Caco-2 (cell line): ENCODE measurements at regions of chr2 and their contacts with region 1.

Region 1: GRCh38 chr2:236180831-236181453 is 12.8 kb upstream of the GBX2 start:
- DNase-seq: peak in 1 of 2 experiments; percentile 61
- H3K4me3 ChIP-seq: no peak overlapping the region
- H3K4me3 Mint-ChIP-seq: peak overlapping the region; percentile 52
- H3K27ac Mint-ChIP-seq: no peak overlapping the region
- H3K4me1 ChIP-seq: 0 out of 2 replicates have a peak, but pooled peaks cover 2% of the 10 kb centered on the region
- H3K4me1 Mint-ChIP-seq: no peaks in the 10 kb centered on the region
- H3K27me3 ChIP-seq: no peaks in the 10 kb centered on the region
- H3K27me3 Mint-ChIP-seq: no peaks in the 10 kb centered on the region
- CTCF ChIP-seq: peak; percentile 53 to 69

Region 2: DNA sequence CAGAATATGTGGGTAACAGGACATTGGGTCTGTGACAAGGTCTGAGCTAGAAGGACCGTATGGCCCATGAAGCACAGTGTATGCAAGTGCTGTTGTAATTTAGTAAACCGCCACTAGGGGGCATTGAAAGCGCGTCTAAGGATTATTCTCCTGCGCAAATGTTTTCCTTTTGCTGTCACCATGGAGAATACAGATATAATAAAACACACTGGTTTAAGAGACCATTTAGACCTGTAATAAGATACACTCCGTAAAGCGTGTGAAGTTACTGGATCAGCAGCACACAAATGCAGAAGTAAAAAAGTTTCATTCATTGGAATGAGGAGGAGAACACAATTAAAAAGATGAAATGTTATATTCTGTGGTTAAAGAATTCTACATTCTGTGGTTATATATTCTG is 414.7 kb before region 1 on chr2:
- CTCF ChIA-PET with region 1: interaction called, 7 read pairs
- POLR2A ChIA-PET with region 1: no interaction called
- intact Hi-C with region 1: loop called (anchors 1 kb)
- DNase-seq: peak; percentile 51 to 73
- H3K4me3 ChIP-seq: no peak overlapping the region
- H3K4me3 Mint-ChIP-seq: no peak overlapping the region
- H3K27ac Mint-ChIP-seq: peak overlapping the region; percentile 80
- H3K4me1 ChIP-seq: no peaks in the 10 kb centered on the region
- H3K4me1 Mint-ChIP-seq: no peaks in the 10 kb centered on the region
- H3K27me3 ChIP-seq: no peaks in the 10 kb centered on the region
- H3K27me3 Mint-ChIP-seq: no peaks in the 10 kb centered on the region
- CTCF ChIP-seq: peak; percentile 59 to 70

Region 3: DNA sequence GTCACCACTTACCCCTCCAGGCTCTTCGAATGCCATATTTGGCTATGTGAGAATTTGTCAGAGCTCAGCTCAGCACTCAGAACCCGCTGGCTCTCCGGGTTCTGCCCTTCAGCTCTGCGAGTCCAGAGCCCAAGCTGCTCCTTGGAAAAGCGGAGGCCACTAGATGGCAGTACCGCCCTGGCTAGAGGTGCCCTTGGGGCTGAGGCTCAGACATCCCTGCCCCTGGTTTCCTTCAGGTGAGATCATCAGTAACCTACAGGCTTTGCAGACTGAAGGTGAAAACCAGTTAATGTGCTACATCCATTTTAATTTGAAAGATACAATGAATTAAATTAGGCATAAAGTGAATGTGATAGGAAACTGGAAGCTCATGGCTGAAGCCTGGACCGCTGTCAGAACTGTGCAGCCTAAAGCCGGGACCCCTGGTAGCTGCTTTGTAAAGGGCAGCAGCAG is 401.5 kb before region 1 on chr2:
- CTCF ChIA-PET with region 1: interaction called, 16 read pairs
- POLR2A ChIA-PET with region 1: no interaction called
- intact Hi-C with region 1: loop called (anchors 1 kb)
- DNase-seq: peak; percentile 75 to 78
- H3K4me3 ChIP-seq: no peak overlapping the region
- H3K4me3 Mint-ChIP-seq: no peak overlapping the region
- H3K27ac Mint-ChIP-seq: no peak overlapping the region
- H3K4me1 ChIP-seq: no peaks in the 10 kb centered on the region
- H3K4me1 Mint-ChIP-seq: no peaks in the 10 kb centered on the region
- H3K27me3 ChIP-seq: no peaks in the 10 kb centered on the region
- H3K27me3 Mint-ChIP-seq: no peaks in the 10 kb centered on the region
- CTCF ChIP-seq: peak; percentile 50 to 83

Region 4: DNA sequence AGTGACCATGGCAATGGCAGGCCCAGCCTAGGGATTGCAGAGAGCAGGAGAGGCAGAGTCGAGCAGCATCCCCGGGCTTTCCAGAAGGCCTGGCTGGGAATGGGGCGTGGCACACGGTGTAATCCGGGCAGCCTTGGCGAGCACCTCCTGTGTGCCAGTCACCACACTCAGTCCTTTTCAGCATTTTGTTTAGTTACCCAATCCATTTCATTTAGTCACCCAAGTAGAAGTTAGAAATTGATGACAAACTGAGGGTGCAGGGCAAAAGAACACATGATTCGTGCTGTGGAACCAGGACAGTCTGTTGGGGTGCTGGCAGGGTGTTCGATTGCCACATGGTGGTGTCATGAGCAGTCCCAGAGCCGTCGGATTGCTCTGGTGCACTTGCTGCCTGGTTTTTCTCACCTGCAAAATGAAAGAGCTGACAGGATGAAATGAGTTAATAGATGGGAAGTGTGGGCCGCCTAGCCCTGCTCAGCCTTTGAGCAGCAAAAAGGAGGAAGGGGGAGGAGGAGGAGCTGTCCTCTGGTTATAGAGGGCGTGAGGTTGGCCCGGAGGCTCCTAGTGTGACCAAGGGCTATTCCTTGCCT is 387.7 kb before region 1 on chr2:
- CTCF ChIA-PET with region 1: no interaction called
- POLR2A ChIA-PET with region 1: no interaction called
- intact Hi-C with region 1: loop called (anchors 5 kb)
- DNase-seq: peak in 1 of 2 experiments; percentile 14
- H3K4me3 ChIP-seq: no peak overlapping the region
- H3K4me3 Mint-ChIP-seq: no peak overlapping the region
- H3K27ac Mint-ChIP-seq: no peak overlapping the region
- H3K4me1 ChIP-seq: no peaks in the 10 kb centered on the region
- H3K4me1 Mint-ChIP-seq: no peaks in the 10 kb centered on the region
- H3K27me3 ChIP-seq: no peaks in the 10 kb centered on the region
- H3K27me3 Mint-ChIP-seq: no peaks in the 10 kb centered on the region
- CTCF ChIP-seq: peak; percentile 15 to 45

Region 5: GRCh38 chr2:236302555-236302954 is 121.6 kb after region 1 on chr2:
- CTCF ChIA-PET with region 1: no interaction called
- POLR2A ChIA-PET with region 1: no interaction called
- intact Hi-C with region 1: no loop called
- DNase-seq: no peak
- H3K4me3 ChIP-seq: no peak overlapping the region
- H3K4me3 Mint-ChIP-seq: no peak overlapping the region
- H3K27ac Mint-ChIP-seq: no peak overlapping the region
- H3K4me1 ChIP-seq: no peaks in the 10 kb centered on the region
- H3K4me1 Mint-ChIP-seq: no peaks in the 10 kb centered on the region
- H3K27me3 ChIP-seq: no peaks in the 10 kb centered on the region
- H3K27me3 Mint-ChIP-seq: peaks cover 6% of the 10 kb centered on the region
- CTCF ChIP-seq: no peak